Panc1 (cell line): ENCODE measurements at regions of chr11 and their contacts with region 1.

Region 1: DNA sequence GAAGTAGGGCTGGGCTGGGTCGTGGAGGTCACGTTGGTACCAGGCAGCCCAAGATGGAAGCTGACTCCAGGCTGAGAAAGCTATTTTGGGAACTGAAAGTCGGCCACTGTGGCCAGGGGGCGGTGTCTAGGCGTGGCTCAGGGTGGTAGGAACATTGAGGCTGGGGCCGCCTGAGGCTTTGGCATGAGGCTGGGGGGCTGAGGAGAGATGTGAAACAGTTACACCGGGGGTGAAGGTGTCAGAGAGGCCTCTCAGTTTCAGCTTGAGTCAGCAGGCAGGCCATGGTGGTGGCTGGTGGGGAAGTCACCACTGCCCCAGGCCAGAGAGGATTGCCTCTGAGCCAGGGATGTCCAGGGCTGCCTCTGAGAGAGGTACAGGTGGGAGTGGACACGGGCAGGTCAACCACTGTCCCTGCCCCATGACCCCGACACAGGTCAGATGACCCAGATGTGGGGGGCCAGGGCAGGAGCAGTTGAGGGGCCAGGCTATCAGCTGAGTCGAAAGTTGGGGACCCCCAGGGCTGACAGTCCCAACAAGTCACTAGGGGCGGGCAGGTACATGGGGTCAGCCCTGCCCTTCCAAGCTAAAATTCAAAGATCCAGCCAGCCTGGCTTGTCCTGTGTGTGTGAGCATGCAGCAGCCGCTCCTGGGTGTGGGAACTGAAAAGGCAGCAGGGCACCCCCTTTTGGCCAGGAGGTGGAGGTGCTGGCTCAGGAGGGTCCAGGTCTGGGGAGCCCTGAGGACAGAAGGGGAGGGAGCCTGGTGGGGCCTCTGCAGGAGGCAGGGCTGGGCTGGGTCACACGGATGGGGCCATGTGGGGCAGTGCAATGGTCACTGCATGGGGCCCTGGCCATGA is 7.2 kb downstream of the KCNK7 start:
- DNase-seq: no peak
- ATAC-seq: peak; percentile 86
- H3K4me3 ChIP-seq: no peak overlapping the region
- H3K27ac ChIP-seq: peak overlapping the region; percentile 36
- H3K4me1 ChIP-seq: peaks cover 17% of the 10 kb centered on the region
- H3K27me3 ChIP-seq: no peaks in the 10 kb centered on the region
- CTCF ChIP-seq: no peak; the same call in 1 of the 2 replicates

Region 2: DNA sequence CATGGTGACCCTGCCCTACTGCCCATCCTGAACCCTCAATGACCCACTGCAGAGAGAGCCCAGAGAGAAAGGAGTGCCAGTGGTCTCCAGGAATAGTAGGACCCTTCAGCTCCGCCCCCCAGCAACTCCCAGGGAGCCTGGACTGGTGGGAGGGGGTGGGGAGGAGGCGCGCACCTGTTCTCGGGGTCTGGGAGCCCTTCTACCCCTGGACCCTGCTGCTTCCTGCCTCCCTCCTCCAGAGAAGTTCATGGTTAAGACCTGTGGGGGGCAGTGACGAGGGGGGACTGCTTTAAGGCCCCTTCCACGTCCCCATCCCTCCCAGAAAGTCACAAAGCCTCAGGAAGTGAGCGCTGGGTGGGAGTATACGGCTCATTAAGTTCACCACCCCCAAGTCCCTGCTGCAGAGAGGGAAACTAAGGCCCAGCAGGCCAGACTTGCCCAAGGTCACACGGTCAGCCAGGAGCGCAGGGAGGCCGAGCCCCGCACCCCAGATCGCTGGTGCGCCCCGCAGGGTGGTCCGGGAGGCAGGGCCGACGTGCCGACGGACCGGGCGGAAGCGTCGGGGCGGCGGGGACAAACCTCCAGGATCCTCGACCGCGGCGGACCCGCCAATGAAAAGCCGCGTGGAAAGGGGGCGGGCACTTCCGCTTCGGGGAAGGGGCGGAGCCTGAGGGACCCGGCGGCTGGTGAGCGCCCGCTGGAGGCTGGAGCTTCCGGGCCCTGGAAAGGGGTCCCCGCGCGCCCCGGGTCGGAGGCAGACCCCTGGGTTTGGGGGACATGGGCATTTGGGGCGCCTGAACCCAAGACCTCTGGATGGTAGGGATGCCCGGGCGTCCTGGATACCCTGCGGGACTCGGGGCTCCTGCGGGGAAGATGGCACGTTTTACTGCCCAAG is 1362.6 kb before region 1 on chr11 and contains the starts of genes NUDT22 and TRPT1:
- CTCF ChIA-PET with region 1: no interaction called
- POLR2A ChIA-PET with region 1: no interaction called
- in situ Hi-C with region 1: no loop called
- intact Hi-C with region 1: no loop called
- DNase-seq: no peak
- ATAC-seq: peak; percentile 81
- H3K4me3 ChIP-seq: peak within 1 kb of the TSS; percentile 76 to 86
- H3K27ac ChIP-seq: peak within 1 kb of the TSS; percentile 90
- H3K4me1 ChIP-seq: peaks cover 18% of the 10 kb centered on the region
- H3K27me3 ChIP-seq: no peaks in the 10 kb centered on the region
- CTCF ChIP-seq: no peak; the same call in 1 of the 2 replicates
- total RNA-seq, gene NUDT22: 98.8 TPM
- total RNA-seq, gene TRPT1: 66.1 TPM

Region 3: DNA sequence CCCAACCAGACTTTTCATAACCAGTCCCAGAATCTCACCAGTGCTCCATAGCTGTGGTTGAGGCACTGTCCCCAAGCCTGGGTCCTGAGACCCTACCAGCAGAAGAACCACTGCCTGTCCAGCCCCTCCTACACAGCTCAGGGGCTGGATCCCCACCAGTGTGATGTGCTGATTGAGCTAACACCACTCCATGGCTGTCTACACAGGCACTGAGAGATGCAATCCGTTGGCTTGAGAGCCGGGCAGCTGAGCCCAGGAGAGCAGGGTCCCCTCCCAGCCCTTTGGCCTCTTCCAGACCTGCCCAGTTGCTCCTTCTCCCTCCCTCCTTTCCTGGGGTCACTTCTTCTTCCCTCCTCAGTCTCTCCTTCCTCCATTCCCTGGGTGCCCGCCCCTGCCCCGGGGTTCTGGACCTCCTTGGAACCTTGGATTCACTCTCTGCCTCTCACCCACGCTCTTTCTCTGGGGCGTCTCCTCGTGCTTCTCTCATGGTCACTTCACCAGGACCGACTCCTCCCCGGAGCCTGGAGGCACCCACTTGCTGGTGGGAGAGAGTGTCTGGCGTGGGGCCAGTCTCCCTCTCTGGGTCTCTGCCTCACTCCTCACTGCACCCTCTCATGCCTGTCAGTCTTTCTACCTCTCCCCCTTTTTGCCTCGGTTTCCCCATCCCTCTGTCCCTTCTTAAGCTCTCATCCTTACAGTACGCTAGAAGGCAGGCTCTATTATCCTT is 64.2 kb before region 1 on chr11:
- CTCF ChIA-PET with region 1: interaction called, 11 read pairs
- POLR2A ChIA-PET with region 1: no interaction called
- in situ Hi-C with region 1: no loop called
- intact Hi-C with region 1: no loop called
- DNase-seq: no peak
- ATAC-seq: peak; percentile 19
- H3K4me3 ChIP-seq: peak overlapping the region; percentile 5 to 39; a peak in 3 of 4 replicates
- H3K27ac ChIP-seq: 0 out of 2 replicates have a peak overlapping the region, but pooled peaks have one; percentile 15
- H3K4me1 ChIP-seq: peaks cover 5% of the 10 kb centered on the region; the same call in 1 of the 2 replicates
- H3K27me3 ChIP-seq: no peaks in the 10 kb centered on the region
- CTCF ChIP-seq: no peak